Heart right ventricle (tissue), 16 donors: ENCODE measurements at regions of chr9 and their contacts with region 1.

Region 1: GRCh38 chr9:14322211-14323082 is 8.5 kb upstream of the NFIB start:
- DNase-seq: peak; percentile 93 to 95
- ATAC-seq: peak; percentile 90 to 98 (median 92)
- H3K4me3 ChIP-seq: peak overlapping the region; percentile 45 to 89 (median 76)
- H3K27ac ChIP-seq: peak overlapping the region; percentile 91 to 100 (median 98)
- H3K4me1 ChIP-seq: peaks cover 4 to 87% (median 60%) of the 10 kb centered on the region in 9 donors
- H3K27me3 ChIP-seq: peaks cover 0 to 26% (median 0%) of the 10 kb centered on the region in 7 donors
- CTCF ChIP-seq: peak; percentile 29 to 79 (median 58)

Region 2: GRCh38 chr9:13778631-13779030 is 543.8 kb before region 1 on chr9:
- intact Hi-C with region 1: loop called in 1 of 10 experiments (anchors 10 kb)
- DNase-seq: no peak
- ATAC-seq: no peak
- H3K4me3 ChIP-seq: no peak overlapping the region
- H3K27ac ChIP-seq: no peak overlapping the region
- H3K4me1 ChIP-seq: peaks cover 0 to 16% (median 5%) of the 10 kb centered on the region in 9 donors
- H3K27me3 ChIP-seq: no peaks in the 10 kb centered on the region
- CTCF ChIP-seq: no peak

Region 3: DNA sequence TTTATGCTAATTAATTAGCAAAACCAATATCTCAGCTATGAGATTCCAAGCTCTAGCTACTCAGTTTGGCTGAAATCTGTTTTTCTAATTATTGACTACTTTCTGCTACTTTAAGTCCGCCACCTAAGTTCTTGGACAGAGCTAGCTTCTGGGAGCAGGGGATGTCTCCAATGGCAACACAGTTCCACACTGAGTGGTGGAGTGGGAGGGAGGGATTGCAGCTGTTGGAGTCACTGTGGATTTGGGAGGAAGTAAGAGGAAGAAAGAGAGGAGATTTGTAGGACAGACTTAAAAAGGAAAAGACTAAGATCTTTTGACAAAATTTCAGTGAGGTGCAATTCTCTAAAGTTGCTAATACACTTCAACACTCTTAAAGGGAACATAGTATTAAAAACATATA is 459.3 kb before region 1 on chr9:
- intact Hi-C with region 1: loop called in 1 of 10 experiments (anchors 5 kb)
- DNase-seq: peak; percentile 18 to 84
- ATAC-seq: peak; percentile 89 to 98 (median 95)
- H3K4me3 ChIP-seq: no peak overlapping the region
- H3K27ac ChIP-seq: peak overlapping the region in 9 of 10 donors; percentile 19 to 57 (median 39)
- H3K4me1 ChIP-seq: peaks cover 3 to 47% (median 33%) of the 10 kb centered on the region in 9 donors
- H3K27me3 ChIP-seq: no peaks in the 10 kb centered on the region
- CTCF ChIP-seq: no peak

Region 4: DNA sequence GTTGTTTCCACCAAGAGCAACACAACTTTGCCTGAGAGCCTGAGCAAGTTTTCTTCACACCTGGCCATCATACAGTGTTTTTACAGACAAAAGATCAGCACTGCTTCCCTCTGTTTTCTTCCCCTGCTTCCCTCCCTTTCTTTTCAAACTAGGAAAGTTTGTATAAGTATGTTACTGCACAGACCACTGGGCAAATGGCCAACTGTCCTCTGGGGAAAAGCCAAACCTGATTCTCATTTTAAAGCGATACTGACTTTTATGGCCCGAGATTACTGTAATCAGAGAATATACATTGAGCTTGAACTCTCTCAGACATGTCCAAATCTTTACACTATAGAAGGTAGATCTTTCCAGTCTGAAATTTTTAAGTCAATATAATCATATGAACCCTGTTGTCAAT is 423.5 kb before region 1 on chr9:
- intact Hi-C with region 1: loop called in 2 of 10 experiments (anchors 2 to 10 kb)
- DNase-seq: peak in 1 of 2 donors; percentile 26
- ATAC-seq: no peak
- H3K4me3 ChIP-seq: no peak overlapping the region
- H3K27ac ChIP-seq: peak overlapping the region in 9 of 10 donors; percentile 37 to 86 (median 70)
- H3K4me1 ChIP-seq: peaks cover 0 to 64% (median 41%) of the 10 kb centered on the region in 9 donors
- H3K27me3 ChIP-seq: no peaks in the 10 kb centered on the region
- CTCF ChIP-seq: no peak

Region 5: DNA sequence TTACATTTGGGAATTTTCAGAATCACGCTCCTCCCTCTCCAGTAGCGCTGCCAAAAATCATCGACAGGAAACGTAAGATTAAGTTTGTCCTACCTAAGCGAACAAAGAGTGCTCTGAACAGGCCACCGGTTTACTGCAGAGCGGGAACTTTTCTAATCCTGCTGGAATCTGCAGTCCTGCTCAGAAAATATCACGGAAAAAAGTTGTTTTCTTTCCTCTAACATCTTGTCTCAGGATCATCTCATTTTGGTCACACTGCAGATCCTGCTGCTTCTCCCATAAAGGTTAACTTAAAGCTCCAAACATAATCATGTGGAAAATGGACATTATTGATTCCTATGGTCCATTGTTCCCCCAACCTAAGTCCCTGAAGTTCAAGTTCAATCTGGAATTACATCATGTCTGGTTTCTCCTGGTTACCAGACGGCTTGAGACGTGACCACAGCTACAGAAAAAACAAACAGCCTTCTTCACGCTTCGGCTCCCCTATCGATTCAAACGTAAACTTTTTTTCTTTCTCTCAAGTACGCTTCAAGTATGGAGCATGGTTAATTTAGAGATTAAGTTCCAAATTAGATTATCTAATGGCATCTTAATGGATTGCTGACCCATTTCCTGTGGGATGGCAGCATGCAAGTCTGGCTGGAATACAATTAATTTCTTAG is 226.1 kb before region 1 on chr9:
- intact Hi-C with region 1: loop called in 3 of 10 experiments (anchors 5 to 10 kb)
- DNase-seq: peak in 1 of 2 donors; percentile 63
- ATAC-seq: peak; percentile 56 to 93 (median 82)
- H3K4me3 ChIP-seq: peak overlapping the region in 8 of 10 donors; percentile 3 to 43 (median 29)
- H3K27ac ChIP-seq: peak overlapping the region; percentile 50 to 93 (median 81)
- H3K4me1 ChIP-seq: peaks cover 3 to 85% (median 55%) of the 10 kb centered on the region in 9 donors
- H3K27me3 ChIP-seq: no peaks in the 10 kb centered on the region
- CTCF ChIP-seq: no peak

Region 6: GRCh38 chr9:14221558-14221957 is 100.9 kb before region 1 on chr9:
- intact Hi-C with region 1: no loop called
- DNase-seq: no peak
- ATAC-seq: peak; percentile 61 to 88 (median 80)
- H3K4me3 ChIP-seq: no peak overlapping the region
- H3K27ac ChIP-seq: peak overlapping the region in 7 of 10 donors; percentile 1 to 84 (median 79)
- H3K4me1 ChIP-seq: peaks cover 11 to 78% (median 64%) of the 10 kb centered on the region in 9 donors
- H3K27me3 ChIP-seq: no peaks in the 10 kb centered on the region
- CTCF ChIP-seq: no peak

Region 7: GRCh38 chr9:14347406-14348122 is 25.1 kb after region 1 on chr9:
- intact Hi-C with region 1: loop called in 5 of 10 experiments (anchors 1 to 5 kb)
- DNase-seq: peak; percentile 66 to 67
- ATAC-seq: peak; percentile 48 to 63 (median 55)
- H3K4me3 ChIP-seq: peak overlapping the region; percentile 42 to 83 (median 57)
- H3K27ac ChIP-seq: peak overlapping the region; percentile 80 to 98 (median 92)
- H3K4me1 ChIP-seq: peaks cover 6 to 84% (median 49%) of the 10 kb centered on the region in 9 donors
- H3K27me3 ChIP-seq: peaks cover 0 to 70% (median 0%) of the 10 kb centered on the region in 7 donors
- CTCF ChIP-seq: peak in 5 of 9 donors; percentile 10 to 56 (median 41)

Region 8: DNA sequence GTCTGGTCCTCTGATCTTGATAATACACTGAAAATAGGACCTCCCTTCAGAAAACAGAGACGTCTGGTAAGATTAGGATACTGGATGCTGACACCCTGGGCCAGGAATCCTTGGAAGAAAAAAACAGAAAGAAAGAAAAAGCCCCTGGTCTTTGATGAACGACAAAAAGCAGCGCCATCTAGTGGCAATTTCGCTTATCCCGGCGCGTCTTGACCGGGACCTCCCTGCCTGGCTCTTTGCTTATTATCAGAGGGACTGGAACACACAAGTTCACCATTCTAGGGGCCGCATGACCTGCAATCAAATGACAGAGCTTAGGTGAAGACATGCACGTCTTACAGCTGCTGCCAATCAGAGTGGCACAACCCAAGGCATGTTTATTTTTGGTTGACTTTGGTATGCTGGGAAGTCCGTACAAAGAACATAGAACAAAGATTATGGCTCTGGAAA is 106.4 kb after region 1 on chr9:
- intact Hi-C with region 1: loop called in 1 of 10 experiments (anchors 5 kb)
- DNase-seq: peak; percentile 64 to 81
- ATAC-seq: peak; percentile 65 to 87 (median 76)
- H3K4me3 ChIP-seq: no peak overlapping the region
- H3K27ac ChIP-seq: peak overlapping the region in 5 of 10 donors; percentile 10 to 65 (median 29)
- H3K4me1 ChIP-seq: peaks cover 6 to 30% (median 14%) of the 10 kb centered on the region in 9 donors
- H3K27me3 ChIP-seq: no peaks in the 10 kb centered on the region
- CTCF ChIP-seq: peak; percentile 67 to 87 (median 82)